PC-9 (cell line): ENCODE measurements at regions of chr12 and their contacts with region 1.

Region 1: GRCh38 chr12:95217377-95218149 is at the starts of genes FGD6 and VEZT:
- DNase-seq: peak; percentile 98
- H3K4me3 ChIP-seq: peak within 1 kb of the TSS; percentile 95
- H3K27ac ChIP-seq: peak within 1 kb of the TSS; percentile 77
- H3K4me1 ChIP-seq: peaks cover 53% of the 10 kb centered on the region
- H3K27me3 ChIP-seq: no peaks in the 10 kb centered on the region
- CTCF ChIP-seq: peak; percentile 68
- total RNA-seq, gene FGD6: 18.1 and 22.0 TPM in 2 replicates
- total RNA-seq, gene VEZT: 35.2 and 46.8 TPM in 2 replicates

Region 2: GRCh38 chr12:94545935-94546771 is 671.4 kb before region 1 on chr12:
- CTCF ChIA-PET with region 1: no interaction called
- POLR2A ChIA-PET with region 1: no interaction called
- intact Hi-C with region 1: loop called (anchors 5 kb)
- DNase-seq: peak; percentile 56
- H3K4me3 ChIP-seq: no peak overlapping the region
- H3K27ac ChIP-seq: no peak overlapping the region
- H3K4me1 ChIP-seq: peaks cover 5% of the 10 kb centered on the region; the same call in 1 of the 2 replicates
- H3K27me3 ChIP-seq: no peaks in the 10 kb centered on the region
- CTCF ChIP-seq: peak; percentile 73

Region 3: DNA sequence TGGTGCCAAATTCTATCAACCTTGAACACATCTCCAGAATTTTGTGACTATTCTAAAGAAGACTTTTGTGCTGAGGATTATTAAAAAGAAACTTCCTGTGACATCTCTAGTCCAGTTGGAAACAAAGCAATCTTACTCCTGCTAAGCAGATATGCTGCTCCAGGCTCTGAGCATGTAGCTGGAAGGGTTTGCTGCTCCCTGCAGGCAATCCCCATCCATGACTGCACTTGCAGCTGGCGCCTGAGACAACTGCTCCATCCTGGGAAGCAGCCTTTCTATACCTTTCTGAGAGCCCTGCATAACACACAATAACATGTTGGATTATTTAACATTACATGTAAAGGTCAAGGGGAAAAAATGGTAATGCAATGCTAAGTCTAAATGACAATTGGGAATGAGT is 319.2 kb before region 1 on chr12:
- CTCF ChIA-PET with region 1: no interaction called
- POLR2A ChIA-PET with region 1: no interaction called
- intact Hi-C with region 1: no loop called
- DNase-seq: no peak
- H3K4me3 ChIP-seq: no peak overlapping the region
- H3K27ac ChIP-seq: no peak overlapping the region
- H3K4me1 ChIP-seq: no peaks in the 10 kb centered on the region
- H3K27me3 ChIP-seq: no peaks in the 10 kb centered on the region
- CTCF ChIP-seq: no peak

Region 4: GRCh38 chr12:95136598-95136997 is 81.0 kb before region 1 on chr12:
- CTCF ChIA-PET with region 1: no interaction called
- POLR2A ChIA-PET with region 1: no interaction called
- intact Hi-C with region 1: loop called (anchors 5 kb)
- DNase-seq: no peak
- H3K4me3 ChIP-seq: no peak overlapping the region
- H3K27ac ChIP-seq: no peak overlapping the region
- H3K4me1 ChIP-seq: no peaks in the 10 kb centered on the region
- H3K27me3 ChIP-seq: no peaks in the 10 kb centered on the region
- CTCF ChIP-seq: no peak

Region 5: DNA sequence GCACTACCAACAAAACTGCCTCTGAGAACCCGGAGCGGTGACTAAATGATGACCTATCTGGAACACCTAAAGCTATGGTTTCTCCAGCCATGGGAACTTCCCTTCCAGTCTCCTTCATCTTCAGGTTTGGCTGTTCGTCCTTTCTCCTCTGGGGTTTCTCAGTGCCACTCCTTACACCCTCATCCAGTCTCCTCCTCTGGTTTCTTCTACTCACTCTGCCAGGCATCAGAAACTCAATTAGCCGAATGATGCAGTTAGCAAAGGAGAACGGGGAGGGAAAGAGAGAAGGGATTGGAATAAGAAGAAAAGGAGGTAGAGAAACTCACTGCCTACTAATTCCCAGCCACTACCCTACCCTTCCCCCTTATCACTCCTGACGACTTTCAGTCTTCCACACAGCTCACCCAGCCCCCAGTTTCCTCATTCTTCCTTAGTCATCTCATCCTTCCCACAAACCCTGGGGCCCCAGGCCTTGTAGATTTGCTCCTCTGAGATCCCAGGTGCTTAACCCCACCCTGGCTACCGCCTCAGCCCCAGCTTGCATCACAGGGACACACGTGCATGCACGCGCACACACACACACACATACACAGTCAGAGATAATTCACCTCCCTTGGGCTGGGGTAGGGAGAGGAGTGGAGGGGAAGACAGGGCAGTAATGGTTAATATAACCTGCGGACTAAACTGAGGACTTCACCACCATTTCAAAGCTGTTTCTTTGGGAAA is 13.3 kb before region 1 on chr12:
- CTCF ChIA-PET with region 1: interaction called, 7 read pairs
- POLR2A ChIA-PET with region 1: interaction called, 11 read pairs
- intact Hi-C with region 1: loop called (anchors 1 kb)
- DNase-seq: peak; percentile 91 to 98
- H3K4me3 ChIP-seq: peak overlapping the region; percentile 48
- H3K27ac ChIP-seq: peak overlapping the region; percentile 98
- H3K4me1 ChIP-seq: peaks cover 80% of the 10 kb centered on the region
- H3K27me3 ChIP-seq: no peaks in the 10 kb centered on the region
- CTCF ChIP-seq: no peak

Region 6: DNA sequence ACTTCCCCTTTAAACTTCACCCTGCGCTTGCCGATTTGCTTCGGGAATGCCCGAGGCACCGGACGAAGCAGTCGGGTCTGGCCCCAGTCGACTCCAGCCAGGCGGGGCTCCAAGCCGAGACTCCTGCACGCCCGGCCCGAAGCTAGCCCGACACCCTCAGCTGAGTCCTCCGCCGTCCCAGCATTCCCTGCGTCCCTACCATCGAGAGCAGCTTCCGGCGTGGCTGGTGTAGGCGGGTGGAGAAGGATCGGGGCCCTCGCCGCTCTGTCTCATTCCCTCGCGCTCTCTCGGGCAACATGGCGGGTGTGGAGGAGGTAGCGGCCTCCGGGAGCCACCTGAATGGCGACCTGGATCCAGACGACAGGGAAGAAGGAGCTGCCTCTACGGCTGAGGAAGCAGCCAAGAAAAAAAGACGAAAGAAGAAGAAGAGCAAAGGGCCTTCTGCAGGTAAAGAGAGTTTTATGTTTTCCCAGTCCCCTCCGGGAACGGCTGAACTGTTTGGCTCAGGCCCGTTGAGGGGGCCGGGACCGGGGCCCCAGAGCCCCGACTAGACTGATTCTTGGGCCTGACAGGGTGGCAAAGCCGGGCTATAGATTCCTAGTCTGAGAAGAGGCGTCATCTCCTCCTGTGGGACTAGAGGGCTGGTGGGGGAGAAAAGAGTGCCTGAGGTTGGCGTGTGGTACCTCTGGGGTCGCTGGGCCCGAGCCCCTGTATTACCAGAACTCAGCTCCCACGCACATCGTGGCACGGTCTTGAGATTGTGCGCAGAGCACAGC is 256.5 kb after region 1 on chr12 and contains the start of gene METAP2:
- CTCF ChIA-PET with region 1: no interaction called
- POLR2A ChIA-PET with region 1: no interaction called
- intact Hi-C with region 1: loop called (anchors 2 kb)
- DNase-seq: peak; percentile 91 to 96
- H3K4me3 ChIP-seq: peak within 1 kb of the TSS; percentile 94
- H3K27ac ChIP-seq: peak within 1 kb of the TSS; percentile 78
- H3K4me1 ChIP-seq: peaks cover 20% of the 10 kb centered on the region
- H3K27me3 ChIP-seq: no peaks in the 10 kb centered on the region
- CTCF ChIP-seq: no peak
- total RNA-seq, gene METAP2: 74.4 and 93.8 TPM in 2 replicates

Region 7: GRCh38 chr12:95805864-95806671 is 588.5 kb after region 1 on chr12:
- CTCF ChIA-PET with region 1: no interaction called
- POLR2A ChIA-PET with region 1: no interaction called
- intact Hi-C with region 1: loop called (anchors 5 kb)
- DNase-seq: peak; percentile 61 to 100
- H3K4me3 ChIP-seq: peak overlapping the region; percentile 11; the same call in 1 of the 2 replicates
- H3K27ac ChIP-seq: peak overlapping the region; percentile 100
- H3K4me1 ChIP-seq: peaks cover 95% of the 10 kb centered on the region
- H3K27me3 ChIP-seq: no peaks in the 10 kb centered on the region
- CTCF ChIP-seq: no peak